HEK293 (cell line): ENCODE measurements at regions of chr3 and their contacts with region 1.

Region 1: GRCh38 chr3:190321789-190322603 is at the start of gene CLDN1:
- H3K4me3 ChIP-seq: peak within 1 kb of the TSS; percentile 83
- H3K27ac ChIP-seq: peak within 1 kb of the TSS; percentile 50; the same call in 1 of the 2 replicates
- H3K4me1 ChIP-seq: peaks cover 3% of the 10 kb centered on the region
- CTCF ChIP-seq: peak; percentile 87

Region 2: DNA sequence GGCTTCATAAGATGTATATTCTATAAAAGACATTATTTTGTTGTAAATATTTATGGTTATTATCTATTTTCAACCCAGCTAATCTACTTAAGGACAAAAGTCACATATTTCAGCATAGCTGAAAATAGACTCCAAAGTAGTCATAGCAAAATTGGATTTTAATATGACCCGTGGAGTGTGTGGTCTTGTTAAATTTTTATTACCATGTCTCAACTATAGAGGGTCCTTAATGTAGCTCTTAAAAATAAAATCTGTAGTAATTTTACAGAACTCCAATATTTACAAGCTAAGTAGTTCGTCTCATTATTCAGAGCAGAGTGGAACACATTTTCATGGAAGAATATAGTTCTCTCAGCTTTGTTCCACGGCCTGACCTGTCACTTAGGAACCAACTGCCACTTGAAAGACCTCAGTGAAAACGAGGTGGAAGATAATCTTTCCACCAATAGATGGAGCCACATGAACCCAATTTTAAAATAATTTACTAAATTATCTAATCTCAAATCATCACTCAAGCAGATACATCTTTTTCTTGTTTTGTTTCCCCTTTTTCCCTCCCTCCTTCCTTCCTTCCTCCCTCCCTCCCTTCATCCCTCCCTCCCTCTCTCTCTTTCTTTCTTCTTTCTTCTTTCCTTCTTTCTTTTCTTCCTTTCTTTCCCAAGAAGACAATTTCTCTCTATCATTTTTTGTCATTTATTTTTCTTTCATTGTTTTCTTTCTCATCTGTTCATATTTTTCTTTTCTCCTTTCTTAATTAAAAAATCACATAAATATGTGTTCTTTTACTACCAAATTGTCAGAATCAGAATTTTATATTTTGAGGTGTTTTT is 96.9 kb before region 1 on chr3:
- CTCF ChIA-PET with region 1: interaction called, 37 read pairs
- POLR2A ChIA-PET with region 1: interaction called, 7 read pairs
- H3K4me3 ChIP-seq: no peak overlapping the region
- H3K27ac ChIP-seq: no peak overlapping the region
- H3K4me1 ChIP-seq: no peaks in the 10 kb centered on the region
- CTCF ChIP-seq: no peak

Region 3: GRCh38 chr3:190239325-190239724 is 82.7 kb before region 1 on chr3:
- CTCF ChIA-PET with region 1: interaction called, 11 read pairs
- POLR2A ChIA-PET with region 1: no interaction called
- H3K4me3 ChIP-seq: no peak overlapping the region
- H3K27ac ChIP-seq: no peak overlapping the region
- H3K4me1 ChIP-seq: no peaks in the 10 kb centered on the region
- CTCF ChIP-seq: no peak

Region 4: GRCh38 chr3:190384241-190384863 is 62.4 kb after region 1 on chr3:
- CTCF ChIA-PET with region 1: no interaction called
- POLR2A ChIA-PET with region 1: no interaction called
- H3K4me3 ChIP-seq: no peak overlapping the region
- H3K27ac ChIP-seq: no peak overlapping the region
- H3K4me1 ChIP-seq: no peaks in the 10 kb centered on the region
- CTCF ChIP-seq: peak; percentile 50

Region 5: GRCh38 chr3:190424478-190425439 is 102.8 kb after region 1 on chr3:
- CTCF ChIA-PET with region 1: interaction called, 10 read pairs
- POLR2A ChIA-PET with region 1: no interaction called
- H3K4me3 ChIP-seq: no peak overlapping the region
- H3K27ac ChIP-seq: no peak overlapping the region
- H3K4me1 ChIP-seq: no peaks in the 10 kb centered on the region
- CTCF ChIP-seq: peak; percentile 68; the same call in 1 of the 2 replicates

Region 6: GRCh38 chr3:190446492-190447279 is 124.7 kb after region 1 on chr3:
- CTCF ChIA-PET with region 1: no interaction called
- POLR2A ChIA-PET with region 1: no interaction called
- H3K4me3 ChIP-seq: no peak overlapping the region
- H3K27ac ChIP-seq: no peak overlapping the region
- H3K4me1 ChIP-seq: no peaks in the 10 kb centered on the region
- CTCF ChIP-seq: no peak